Posterior vena cava (tissue), 2 donors: ENCODE measurements at regions of chr20 and their contacts with region 1.

Region 1: GRCh38 chr20:52340036-52340648 is 148.6 kb upstream of the ZFP64 start:
- DNase-seq: no peak

Region 2: DNA sequence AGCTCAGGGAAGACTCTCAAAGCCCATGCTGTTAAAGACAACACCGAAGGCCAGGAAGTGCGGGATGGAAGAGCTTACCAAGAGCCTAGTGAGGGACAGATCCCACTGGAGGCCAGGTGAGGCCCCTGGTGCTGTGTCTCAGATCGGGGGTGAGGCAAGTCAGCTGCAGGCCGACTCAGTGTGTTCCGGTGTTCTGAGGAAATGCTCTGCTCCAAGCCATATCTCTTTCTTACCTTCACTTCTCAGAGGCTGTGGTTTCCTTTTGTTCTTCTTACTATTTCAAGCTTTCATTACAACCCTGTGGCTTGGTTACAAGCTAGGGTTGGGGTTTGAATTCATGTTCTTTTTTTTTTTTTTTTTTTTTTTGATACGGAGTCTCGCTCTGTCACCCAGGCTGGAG is 34.3 kb before region 1 on chr20:
- intact Hi-C with region 1: loop called in 1 of 2 experiments (anchors 1 kb)
- DNase-seq: no peak

Region 3: GRCh38 chr20:52372169-52372568 is 32.0 kb after region 1 on chr20:
- intact Hi-C with region 1: loop called in 1 of 2 experiments (anchors 5 kb)
- DNase-seq: no peak

Region 4: DNA sequence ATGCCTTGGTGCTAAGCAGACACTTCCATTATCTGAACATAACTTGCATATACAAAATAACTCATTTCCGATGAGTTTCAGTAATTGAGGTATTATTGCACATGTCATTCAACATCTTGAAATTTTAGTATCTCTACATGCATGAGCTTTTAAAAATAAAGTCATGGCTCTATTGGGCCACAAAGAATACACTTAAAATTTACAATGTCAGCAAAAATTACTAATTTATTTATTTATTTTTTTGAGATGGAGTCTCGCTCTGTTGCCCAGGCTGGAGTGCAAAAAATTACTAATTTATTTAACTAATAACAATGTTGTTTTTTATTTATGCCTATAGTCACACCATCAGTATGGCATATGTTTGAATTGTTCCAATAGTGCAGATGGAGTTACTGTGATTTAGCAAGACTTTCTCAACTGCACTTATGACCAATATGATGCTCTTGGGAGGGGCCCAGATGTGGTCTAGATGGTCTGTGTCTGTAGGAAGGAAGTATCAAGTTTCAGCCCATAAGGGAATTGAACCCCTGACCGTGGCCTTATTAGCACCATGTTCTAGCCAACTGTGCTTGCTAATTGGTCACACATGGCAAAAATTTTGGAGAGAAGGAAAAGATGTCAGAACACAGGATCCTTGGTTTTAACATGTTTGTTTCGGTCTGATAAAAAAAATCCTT is 261.3 kb after region 1 on chr20:
- intact Hi-C with region 1: no loop called
- DNase-seq: no peak

Region 5: GRCh38 chr20:53262294-53262859 is 922.2 kb after region 1 on chr20:
- intact Hi-C with region 1: no loop called
- DNase-seq: no peak